Caco-2 (cell line): ENCODE measurements at regions of chr18 and their contacts with region 1.

Region 1: DNA sequence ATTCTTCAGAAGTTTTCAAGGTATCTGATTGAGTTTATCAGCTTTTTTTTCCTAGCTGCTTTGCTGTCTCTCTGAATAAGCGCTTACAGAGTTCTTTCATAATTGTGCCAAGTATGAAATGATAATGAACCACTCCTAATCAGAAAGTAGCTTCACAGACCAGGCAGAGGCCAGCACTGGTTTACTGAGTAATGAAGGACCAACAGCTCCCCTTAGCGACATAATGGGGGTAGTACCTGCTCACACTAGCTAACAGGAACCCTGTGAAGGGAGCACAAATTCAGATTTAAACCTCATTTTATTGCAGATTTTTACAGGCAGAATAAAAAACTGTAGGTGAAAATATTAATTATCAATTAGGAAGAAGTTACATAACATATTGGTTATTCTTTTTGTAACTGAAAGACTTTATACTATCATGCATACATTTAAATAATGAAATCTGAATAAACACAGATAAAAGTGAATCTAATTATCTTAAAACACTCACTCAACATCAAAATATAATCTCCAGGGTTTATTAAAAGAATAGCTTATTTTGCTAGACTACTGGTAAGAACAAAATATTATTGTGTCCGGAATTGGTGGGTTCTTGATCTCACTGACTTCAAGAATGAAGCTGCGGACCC is 53.7 kb upstream of the LRRC30 start:
- DNase-seq: peak; percentile 76 to 77
- H3K4me3 ChIP-seq: no peak overlapping the region
- H3K4me3 Mint-ChIP-seq: no peak overlapping the region
- H3K27ac Mint-ChIP-seq: no peak overlapping the region
- H3K4me1 ChIP-seq: peaks cover 36% of the 10 kb centered on the region
- H3K4me1 Mint-ChIP-seq: peaks cover 15% of the 10 kb centered on the region
- H3K27me3 ChIP-seq: no peaks in the 10 kb centered on the region
- H3K27me3 Mint-ChIP-seq: no peaks in the 10 kb centered on the region
- CTCF ChIP-seq: peak; percentile 81 to 91

Region 2: DNA sequence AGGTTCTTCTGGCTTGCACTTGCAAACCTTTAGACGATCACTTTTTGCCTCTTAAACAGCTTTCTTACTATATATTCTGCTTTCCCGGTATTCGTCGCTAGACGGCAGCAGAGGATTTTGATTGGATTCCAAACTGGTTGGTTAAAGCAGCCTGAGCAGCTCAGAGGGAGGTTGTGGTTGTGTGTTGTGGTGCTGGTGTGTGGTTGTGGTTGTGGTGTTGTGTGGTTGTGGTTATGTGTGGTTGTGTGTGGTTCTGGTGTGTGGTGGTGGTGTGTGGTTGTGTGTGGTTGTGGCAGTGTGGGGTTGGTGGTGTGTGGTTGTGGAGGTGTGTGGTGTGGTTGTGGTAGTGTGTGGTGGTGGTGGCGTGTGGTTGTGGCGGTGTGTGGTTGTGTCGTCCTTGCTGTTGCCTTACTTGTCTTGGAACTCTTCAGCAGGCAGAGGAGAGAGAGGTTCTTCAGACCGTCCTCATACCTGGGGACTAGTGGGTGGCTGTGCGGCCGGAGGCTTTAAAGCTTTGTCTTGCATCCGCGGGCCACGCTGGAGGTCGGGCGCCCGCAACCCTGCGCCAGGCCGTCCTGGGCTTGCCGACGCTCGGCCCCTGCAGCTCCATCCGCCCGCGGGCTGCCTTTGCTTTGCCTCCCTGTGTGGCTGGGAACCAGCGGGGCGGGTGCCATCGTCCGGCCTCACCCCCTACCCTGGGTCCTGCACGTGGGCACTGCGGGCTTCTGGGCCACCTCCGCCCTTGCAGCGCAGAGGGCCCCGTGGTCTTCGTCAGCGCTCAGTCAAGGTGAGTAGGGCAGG is 256.9 kb before region 1 on chr18:
- CTCF ChIA-PET with region 1: interaction called, 45 read pairs
- POLR2A ChIA-PET with region 1: no interaction called
- intact Hi-C with region 1: loop called (anchors 1 kb)
- DNase-seq: peak; percentile 75 to 79
- H3K4me3 ChIP-seq: no peak overlapping the region
- H3K4me3 Mint-ChIP-seq: peak overlapping the region; percentile 45
- H3K27ac Mint-ChIP-seq: peak overlapping the region; percentile 85
- H3K4me1 ChIP-seq: peaks cover 43% of the 10 kb centered on the region
- H3K4me1 Mint-ChIP-seq: peaks cover 21% of the 10 kb centered on the region
- H3K27me3 ChIP-seq: no peaks in the 10 kb centered on the region
- H3K27me3 Mint-ChIP-seq: no peaks in the 10 kb centered on the region
- CTCF ChIP-seq: peak; percentile 67 to 77

Region 3: DNA sequence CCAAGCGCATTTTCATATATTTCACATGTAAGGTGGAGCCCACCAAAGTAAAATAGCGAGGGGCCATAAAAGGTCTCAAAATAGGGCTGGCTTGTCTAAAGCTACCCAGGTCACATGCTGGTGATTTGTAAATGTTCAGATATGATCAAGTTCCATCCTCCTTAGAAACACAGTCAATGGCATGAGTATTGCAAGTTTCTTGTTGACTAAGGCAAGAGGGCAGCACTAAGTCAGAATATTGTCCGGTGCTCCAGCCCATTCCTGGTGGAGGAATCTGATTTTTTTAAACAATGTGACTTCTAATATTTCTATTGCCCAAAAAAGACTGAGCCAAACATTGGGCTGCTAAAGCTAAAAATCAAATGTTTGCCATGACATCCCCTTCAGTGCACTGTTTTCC is 144.7 kb before region 1 on chr18:
- CTCF ChIA-PET with region 1: interaction called, 32 read pairs
- POLR2A ChIA-PET with region 1: no interaction called
- intact Hi-C with region 1: loop called (anchors 1 kb)
- DNase-seq: peak in 1 of 2 experiments; percentile 29
- H3K4me3 ChIP-seq: no peak overlapping the region
- H3K4me3 Mint-ChIP-seq: peak overlapping the region; percentile 35
- H3K27ac Mint-ChIP-seq: no peak overlapping the region
- H3K4me1 ChIP-seq: peaks cover 31% of the 10 kb centered on the region
- H3K4me1 Mint-ChIP-seq: peaks cover 21% of the 10 kb centered on the region
- H3K27me3 ChIP-seq: no peaks in the 10 kb centered on the region
- H3K27me3 Mint-ChIP-seq: no peaks in the 10 kb centered on the region
- CTCF ChIP-seq: peak in 1 of 2 experiments; percentile 68

Region 4: DNA sequence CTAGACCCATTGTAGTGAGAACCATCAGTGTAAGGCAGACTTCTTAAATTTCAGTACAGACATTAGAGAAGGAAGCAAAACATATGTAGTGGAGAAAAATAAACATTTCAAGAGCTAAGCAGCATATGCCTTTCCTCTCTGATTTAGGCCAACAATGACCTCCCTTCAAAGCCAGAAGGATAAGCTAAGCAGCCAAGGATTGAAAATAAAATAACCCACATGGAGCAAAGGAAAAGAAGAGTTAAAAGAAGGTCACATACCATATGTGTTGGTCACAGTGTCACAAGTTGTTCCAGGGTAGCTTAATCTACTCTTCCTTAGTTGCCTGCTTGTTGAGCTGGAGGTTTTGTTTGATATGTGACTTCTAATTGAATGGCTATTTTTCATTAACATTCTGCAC is 44.0 kb before region 1 on chr18:
- CTCF ChIA-PET with region 1: interaction called, 13 read pairs
- POLR2A ChIA-PET with region 1: interaction called, 3 read pairs
- intact Hi-C with region 1: loop called (anchors 1 kb)
- DNase-seq: peak in 1 of 2 experiments; percentile 68
- H3K4me3 ChIP-seq: no peak overlapping the region
- H3K4me3 Mint-ChIP-seq: peak overlapping the region; percentile 67
- H3K27ac Mint-ChIP-seq: peak overlapping the region; percentile 72
- H3K4me1 ChIP-seq: peaks cover 50% of the 10 kb centered on the region
- H3K4me1 Mint-ChIP-seq: peaks cover 44% of the 10 kb centered on the region
- H3K27me3 ChIP-seq: no peaks in the 10 kb centered on the region
- H3K27me3 Mint-ChIP-seq: no peaks in the 10 kb centered on the region
- CTCF ChIP-seq: no peak

Region 5: DNA sequence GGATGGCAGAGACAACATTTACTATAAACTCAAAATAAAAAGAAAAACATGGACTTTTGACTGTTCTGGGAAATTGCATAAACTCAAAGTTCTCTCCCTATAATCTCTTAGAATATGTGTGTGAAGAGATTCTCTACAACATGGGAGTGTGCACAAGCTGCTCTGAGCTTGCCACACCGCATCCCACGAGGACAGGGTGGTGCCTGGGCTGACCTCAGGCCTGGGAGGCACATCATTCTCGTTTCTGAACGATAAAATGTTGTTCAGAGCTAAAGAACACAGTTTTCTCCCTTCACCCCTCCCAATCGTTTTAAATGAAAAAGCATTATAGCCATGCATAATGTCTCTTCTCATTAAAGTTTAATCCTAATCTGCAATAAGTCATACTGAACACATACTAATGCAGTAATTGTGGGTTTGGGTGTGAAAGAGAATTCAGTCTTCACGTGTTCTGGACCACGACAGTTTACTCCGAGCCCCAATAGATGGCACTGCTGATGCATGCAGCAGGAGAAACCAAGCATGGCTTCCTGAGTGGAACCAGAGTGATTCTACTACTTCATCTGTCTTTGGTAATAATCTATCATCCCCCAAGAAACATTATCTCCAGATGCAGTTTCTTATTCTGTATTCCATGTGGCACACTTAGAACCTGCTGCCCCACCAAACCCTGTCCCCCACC is 12.8 kb before region 1 on chr18:
- CTCF ChIA-PET with region 1: interaction called, 9 read pairs
- POLR2A ChIA-PET with region 1: no interaction called
- intact Hi-C with region 1: loop called (anchors 1 kb)
- DNase-seq: peak in 1 of 2 experiments; percentile 50
- H3K4me3 ChIP-seq: no peak overlapping the region
- H3K4me3 Mint-ChIP-seq: no peak overlapping the region
- H3K27ac Mint-ChIP-seq: peak overlapping the region; percentile 7
- H3K4me1 ChIP-seq: peaks cover 76% of the 10 kb centered on the region
- H3K4me1 Mint-ChIP-seq: peaks cover 58% of the 10 kb centered on the region
- H3K27me3 ChIP-seq: no peaks in the 10 kb centered on the region
- H3K27me3 Mint-ChIP-seq: no peaks in the 10 kb centered on the region
- CTCF ChIP-seq: peak; percentile 28 to 47

Region 6: DNA sequence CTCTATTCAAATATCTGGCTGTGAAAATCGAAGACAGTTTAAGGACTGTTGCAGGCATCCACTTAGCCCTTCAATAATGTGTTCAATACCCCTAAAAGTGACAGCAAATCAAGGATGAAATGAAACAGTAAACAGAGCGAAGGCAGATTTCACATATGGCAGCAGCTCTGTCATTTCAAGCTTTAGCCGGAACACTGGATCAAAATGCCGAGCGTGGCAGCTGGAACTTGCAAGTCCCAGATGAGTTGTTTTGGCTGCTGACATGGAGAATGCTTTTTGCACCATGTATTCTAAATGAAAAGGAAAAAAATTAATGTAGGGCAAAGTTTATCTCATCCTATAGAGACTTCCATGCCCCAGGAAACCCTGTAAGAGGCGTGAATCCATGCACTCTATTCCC is 71.6 kb after region 1 on chr18:
- CTCF ChIA-PET with region 1: no interaction called
- POLR2A ChIA-PET with region 1: no interaction called
- intact Hi-C with region 1: no loop called
- DNase-seq: no peak
- H3K4me3 ChIP-seq: no peak overlapping the region
- H3K4me3 Mint-ChIP-seq: no peak overlapping the region
- H3K27ac Mint-ChIP-seq: no peak overlapping the region
- H3K4me1 ChIP-seq: no peaks in the 10 kb centered on the region
- H3K4me1 Mint-ChIP-seq: no peaks in the 10 kb centered on the region
- H3K27me3 ChIP-seq: no peaks in the 10 kb centered on the region
- H3K27me3 Mint-ChIP-seq: peaks cover 5% of the 10 kb centered on the region
- CTCF ChIP-seq: no peak